PC-3 (cell line): ENCODE measurements at regions of chr11 and their contacts with region 1.

Region 1: GRCh38 chr11:105790840-105791239 is 181.0 kb downstream of the GRIA4 start:
- DNase-seq: no peak
- ATAC-seq: no peak
- H3K4me3 ChIP-seq: no peak overlapping the region
- H3K27ac ChIP-seq: no peak overlapping the region
- H3K4me1 ChIP-seq: no peaks in the 10 kb centered on the region
- H3K27me3 ChIP-seq: no peaks in the 10 kb centered on the region
- CTCF ChIP-seq: no peak

Region 2: GRCh38 chr11:105763594-105763993 is 27.2 kb before region 1 on chr11:
- CTCF ChIA-PET with region 1: no interaction called
- POLR2A ChIA-PET with region 1: interaction called, 11 read pairs
- intact Hi-C with region 1: no loop called
- DNase-seq: no peak
- ATAC-seq: no peak
- H3K4me3 ChIP-seq: no peak overlapping the region
- H3K27ac ChIP-seq: no peak overlapping the region
- H3K4me1 ChIP-seq: no peaks in the 10 kb centered on the region
- H3K27me3 ChIP-seq: no peaks in the 10 kb centered on the region
- CTCF ChIP-seq: no peak